ENCODE measurements at regions of chr17 and their contacts with region 1.

Region 1: GRCh38 chr17:42819944-42820535 is 4.0 kb downstream of the BECN1 start:
- DNase-seq: no peak
- H3K4me3 ChIP-seq: no peak overlapping the region
- H3K27ac ChIP-seq: no peak overlapping the region
- H3K4me1 ChIP-seq: peaks cover 25% of the 10 kb centered on the region
- H3K27me3 ChIP-seq: no peaks in the 10 kb centered on the region
- CTCF ChIP-seq: no peak
- POLR2A ChIP-seq: no peak

Region 2: DNA sequence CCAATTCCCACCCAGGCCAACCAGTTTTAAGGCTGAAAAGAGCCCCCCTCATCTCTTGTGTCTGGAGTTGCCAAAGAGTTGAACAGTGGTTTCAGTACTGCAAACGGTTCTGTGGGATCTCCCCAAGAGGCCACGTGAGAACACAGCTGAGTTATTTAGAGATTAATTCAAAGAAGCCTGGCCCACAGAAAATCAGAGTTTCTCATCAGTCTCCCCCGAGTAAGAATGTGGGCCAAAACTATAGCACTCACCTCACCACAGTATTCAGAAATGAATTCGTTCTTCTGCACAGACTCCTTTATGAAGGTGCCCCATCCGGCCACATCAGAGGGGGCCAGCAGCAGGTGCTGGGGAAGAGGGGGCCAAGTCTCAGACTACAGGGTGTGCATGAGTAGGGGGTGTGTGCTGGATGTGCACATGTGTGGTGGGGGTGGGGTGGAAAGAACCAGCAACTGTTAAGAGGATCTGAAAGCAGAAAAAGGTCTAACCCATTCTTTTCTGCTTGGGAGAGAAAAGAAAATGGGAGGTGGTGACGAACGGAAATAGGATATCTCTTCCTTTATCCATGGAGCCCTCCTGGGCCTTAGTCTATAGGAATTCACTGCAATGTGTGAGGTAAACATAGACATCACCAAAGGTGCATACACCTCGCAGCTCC is 115.1 kb before region 1 on chr17:
- intact Hi-C with region 1: loop called (anchors 10 kb)
- DNase-seq: no peak
- H3K4me3 ChIP-seq: no peak overlapping the region
- H3K27ac ChIP-seq: no peak overlapping the region
- H3K4me1 ChIP-seq: peaks cover 2% of the 10 kb centered on the region
- H3K27me3 ChIP-seq: no peaks in the 10 kb centered on the region
- CTCF ChIP-seq: no peak
- POLR2A ChIP-seq: no peak

Measured in vagina (tissue), 2 donors.